Right cardiac atrium (tissue), 5 donors: ENCODE measurements at regions of chr18 and their contacts with region 1.

Region 1: GRCh38 chr18:49802623-49803022 is 10.7 kb downstream of the ACAA2 start:
- DNase-seq: no peak
- ATAC-seq: no peak
- H3K4me3 ChIP-seq: no peak overlapping the region
- H3K27ac ChIP-seq: no peak overlapping the region
- H3K4me1 ChIP-seq: peaks cover 3% of the 10 kb centered on the region
- H3K27me3 ChIP-seq: no peaks in the 10 kb centered on the region

Region 2: GRCh38 chr18:49849331-49850217 is 47.0 kb after region 1 on chr18:
- intact Hi-C with region 1: loop called in 1 of 4 experiments (anchors 5 kb)
- DNase-seq: peak in 2 of 3 donors; percentile 48 to 49
- ATAC-seq: peak; percentile 66 to 80
- H3K4me3 ChIP-seq: no peak overlapping the region
- H3K27ac ChIP-seq: no peak overlapping the region
- H3K4me1 ChIP-seq: peaks cover 2% of the 10 kb centered on the region
- H3K27me3 ChIP-seq: no peaks in the 10 kb centered on the region

Region 3: DNA sequence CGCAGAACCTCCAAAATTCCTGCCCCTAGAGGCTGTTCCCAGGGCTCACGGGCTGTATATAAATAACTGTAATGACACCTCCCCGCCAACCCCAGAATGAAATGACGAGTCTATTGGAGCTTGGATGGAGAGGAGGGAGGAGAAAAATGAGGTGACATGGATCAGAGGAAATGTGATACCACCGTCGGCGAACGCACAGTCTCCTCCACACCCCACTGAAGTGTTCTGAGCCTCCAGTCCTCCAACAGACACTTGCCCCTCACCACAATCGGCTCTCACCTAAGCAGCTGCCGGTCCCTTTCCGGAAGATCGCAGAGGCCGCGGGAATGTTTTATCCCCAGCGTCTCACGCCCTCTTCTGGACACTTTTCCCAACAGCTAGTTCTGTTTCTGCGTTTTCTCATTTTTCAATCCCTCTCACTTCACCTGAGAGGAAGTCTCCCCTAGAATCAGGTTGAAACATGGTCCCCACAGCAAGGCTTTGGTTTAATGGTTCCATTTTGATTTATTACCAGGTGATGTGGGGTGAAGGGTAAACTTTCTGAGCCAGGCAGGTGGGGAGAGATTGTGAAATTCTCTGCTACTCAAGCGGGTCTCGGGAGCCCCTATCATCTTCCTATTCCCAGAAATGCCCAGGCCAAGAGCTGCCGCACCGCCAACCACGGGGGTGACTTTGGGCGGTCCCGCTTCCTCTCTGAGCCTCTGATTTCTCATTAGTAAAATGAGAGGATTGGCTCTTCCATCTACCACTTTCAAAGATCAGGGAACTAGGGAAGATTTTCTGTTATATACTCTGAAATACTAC is 401.4 kb after region 1 on chr18:
- intact Hi-C with region 1: no loop called
- DNase-seq: no peak
- ATAC-seq: peak in 1 of 2 donors; percentile 32
- H3K4me3 ChIP-seq: peak overlapping the region; percentile 35
- H3K27ac ChIP-seq: no peak overlapping the region
- H3K4me1 ChIP-seq: no peaks in the 10 kb centered on the region
- H3K27me3 ChIP-seq: no peaks in the 10 kb centered on the region